Lower lobe of right lung (tissue), 2 donors: ENCODE measurements at regions of chr3 and their contacts with region 1.

Region 1: DNA sequence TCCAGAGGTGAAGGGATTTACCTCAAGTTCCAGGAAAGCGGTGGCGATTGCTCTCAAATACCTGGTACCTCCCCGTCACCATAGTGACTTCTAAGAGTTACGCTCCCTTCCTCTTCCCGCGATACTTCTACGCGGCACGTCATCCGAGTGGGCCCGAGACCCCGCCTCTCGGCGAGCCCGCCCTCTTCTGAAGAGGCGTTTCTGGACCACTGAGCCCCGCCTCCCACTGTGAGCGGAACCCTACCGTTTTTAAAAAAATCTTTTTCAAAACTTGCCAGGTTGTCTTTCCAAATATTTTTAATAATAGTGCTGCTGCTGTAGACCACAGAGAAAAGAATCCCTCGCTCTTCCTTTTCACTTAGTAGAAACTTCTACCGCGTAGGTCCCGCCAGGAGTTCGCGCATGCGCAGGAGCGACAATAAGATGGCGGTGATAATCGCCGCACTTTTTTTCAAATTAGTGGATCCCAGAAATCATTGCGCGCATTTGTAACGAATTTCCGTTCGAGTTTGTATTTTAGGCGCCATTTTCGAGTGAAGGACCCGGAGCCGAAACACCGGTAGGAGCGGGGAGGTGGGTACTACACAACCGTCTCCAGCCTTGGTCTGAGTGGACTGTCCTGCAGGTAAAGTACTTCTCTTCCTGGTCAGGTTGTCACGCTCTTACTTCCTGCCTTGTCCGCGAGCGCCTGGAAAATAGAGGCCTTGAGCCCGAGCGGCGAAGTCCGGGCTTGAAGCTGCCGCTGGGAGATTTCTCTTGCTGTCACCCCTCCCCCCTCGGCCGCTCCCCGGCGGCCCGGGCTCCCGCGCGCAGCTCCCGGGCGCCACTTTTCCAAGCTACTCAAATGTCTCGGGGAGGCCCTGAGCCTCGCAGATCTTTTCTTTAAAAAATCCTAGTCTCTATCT is at the starts of genes IFT80 and SMC4:
- DNase-seq: peak; percentile 97
- ATAC-seq: peak; percentile 97 to 98
- H3K4me3 ChIP-seq: peak within 1 kb of the TSS; percentile 81
- H3K27ac ChIP-seq: peak within 1 kb of the TSS; percentile 88
- H3K4me1 ChIP-seq: peaks cover 34% of the 10 kb centered on the region
- H3K27me3 ChIP-seq: no peaks in the 10 kb centered on the region
- CTCF ChIP-seq: no peak
- total RNA-seq, gene IFT80: 37.7 TPM
- total RNA-seq, gene SMC4: 57.6 TPM

Region 2: DNA sequence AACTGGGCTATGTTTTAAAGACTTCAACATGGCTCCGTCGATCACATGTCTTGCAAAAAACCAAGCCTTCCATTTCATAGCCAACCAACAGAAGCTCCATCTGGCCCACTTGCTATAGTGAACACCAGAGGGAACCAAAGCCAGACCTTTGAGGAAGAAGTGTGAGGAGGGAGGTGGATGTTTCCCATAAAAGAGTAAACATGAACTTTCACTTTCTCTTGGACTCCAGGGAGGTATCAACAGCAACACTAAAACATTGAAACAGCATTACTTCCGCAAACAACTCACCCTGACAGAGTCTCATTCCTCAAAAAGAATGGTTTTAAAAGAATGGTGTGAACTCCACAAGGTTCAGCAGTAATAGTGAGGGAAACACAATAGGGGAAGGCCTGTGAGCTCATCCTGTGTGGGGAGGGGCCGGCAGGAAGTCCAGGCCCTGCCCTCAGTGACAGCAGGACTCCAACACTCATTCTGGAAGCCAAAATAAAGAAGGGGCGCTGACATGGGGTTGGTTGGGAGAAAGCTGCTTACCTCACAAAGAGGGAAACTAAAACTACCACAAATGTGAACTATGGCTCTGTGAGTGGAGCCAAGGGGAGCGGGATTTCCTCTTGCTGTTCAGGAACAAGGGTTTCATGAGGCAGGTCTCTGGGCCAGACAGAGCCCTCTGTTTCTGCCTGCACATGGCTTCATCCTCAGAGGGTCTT is 469.8 kb before region 1 on chr3:
- intact Hi-C with region 1: no loop called
- DNase-seq: peak; percentile 46
- ATAC-seq: peak; percentile 81 to 84
- H3K4me3 ChIP-seq: no peak overlapping the region
- H3K27ac ChIP-seq: peak overlapping the region; percentile 63
- H3K4me1 ChIP-seq: peaks cover 13% of the 10 kb centered on the region
- H3K27me3 ChIP-seq: no peaks in the 10 kb centered on the region
- CTCF ChIP-seq: peak; percentile 35

Region 3: DNA sequence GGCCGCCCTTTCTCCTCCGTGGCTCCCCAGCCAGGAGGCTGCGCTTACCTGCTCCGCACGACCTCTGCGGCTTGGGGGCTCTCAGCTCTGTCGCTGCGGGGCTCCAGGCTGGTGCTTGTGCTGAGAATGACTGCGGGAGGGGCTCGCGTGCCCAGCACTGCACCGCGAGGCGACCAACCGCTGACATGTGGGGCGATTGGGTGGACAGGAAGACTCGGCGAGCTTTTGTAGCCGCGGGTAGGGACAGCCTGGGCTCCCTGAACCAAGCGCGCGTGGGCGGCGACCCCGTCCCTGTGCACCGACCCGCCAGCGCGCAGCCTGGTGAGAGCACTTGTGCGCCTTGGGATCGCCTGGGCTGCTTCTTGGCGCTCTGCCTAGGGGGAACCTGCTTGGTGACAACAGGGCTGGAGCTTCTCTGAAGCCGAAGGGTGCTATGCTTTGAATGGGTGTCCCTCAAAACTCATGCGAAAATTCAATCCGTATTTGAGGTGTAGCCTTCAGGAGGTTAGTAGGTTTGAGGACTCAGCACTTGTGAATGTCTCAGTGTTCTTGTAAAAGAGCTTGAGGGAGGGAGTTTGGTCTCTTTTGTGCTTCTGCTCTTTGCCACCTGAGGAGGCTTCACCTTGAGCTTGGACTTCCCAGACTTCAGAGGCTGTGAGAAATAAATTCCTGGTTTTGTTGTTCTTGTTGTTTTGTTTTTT is 360.4 kb before region 1 on chr3:
- intact Hi-C with region 1: loop called (anchors 10 kb)
- DNase-seq: peak; percentile 67
- ATAC-seq: peak; percentile 76 to 77
- H3K4me3 ChIP-seq: peak overlapping the region; percentile 40
- H3K27ac ChIP-seq: no peak overlapping the region
- H3K4me1 ChIP-seq: peaks cover 6% of the 10 kb centered on the region
- H3K27me3 ChIP-seq: peaks cover 8% of the 10 kb centered on the region
- CTCF ChIP-seq: no peak